Ascending aorta (tissue), 2 donors: ENCODE measurements at regions of chr6 and their contacts with region 1.

Region 1: DNA sequence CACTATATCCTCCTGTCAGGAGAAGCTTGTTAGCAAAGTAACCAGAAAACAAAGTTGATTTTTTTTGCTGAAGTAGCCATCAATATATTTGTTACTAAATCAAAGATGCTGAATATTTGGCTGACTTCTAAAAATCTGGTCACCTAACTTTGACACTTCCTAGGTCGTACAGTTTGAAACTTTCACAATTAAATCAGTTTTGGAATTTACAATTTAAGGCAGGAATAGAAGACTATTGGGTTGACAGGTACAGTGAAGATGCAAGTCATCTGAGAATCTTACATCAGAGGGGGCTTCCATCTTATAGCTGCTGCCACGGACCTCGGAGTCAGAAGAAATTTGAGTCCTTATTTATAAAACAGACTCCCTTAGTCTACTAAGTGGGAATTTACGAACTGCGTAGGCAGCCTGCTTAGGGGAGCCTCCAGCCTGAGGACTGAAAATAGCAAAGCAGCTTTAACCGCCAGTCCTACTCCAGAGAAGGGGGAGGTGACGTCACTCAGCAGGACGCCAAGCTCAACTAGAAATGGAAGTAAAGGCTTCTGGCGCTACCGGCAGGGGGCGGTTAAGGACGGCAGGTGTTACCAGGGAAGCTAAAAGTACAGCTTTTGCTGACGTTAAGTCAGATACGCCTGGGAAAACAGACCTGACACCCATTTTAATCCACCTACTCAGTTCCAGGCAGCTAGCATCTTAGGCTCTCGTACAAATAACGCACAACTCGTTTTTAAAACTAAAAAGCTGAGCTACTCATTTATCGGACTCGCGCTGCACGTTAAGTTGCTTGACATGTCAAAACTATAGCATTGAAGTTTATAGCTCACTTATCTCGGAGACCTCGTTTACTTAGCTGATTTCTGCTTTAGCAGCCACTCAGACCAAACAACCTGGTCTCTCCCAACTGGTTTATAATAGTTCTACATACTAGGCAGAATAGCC is 61.1 kb upstream of the HFE start:
- DNase-seq: peak; percentile 96 to 99
- H3K4me3 ChIP-seq: peak overlapping the region; percentile 64 to 75
- H3K27ac ChIP-seq: peak overlapping the region; percentile 90 to 97
- H3K4me1 ChIP-seq: peaks cover 0 to 19% of the 10 kb centered on the region in 2 donors
- H3K27me3 ChIP-seq: no peaks in the 10 kb centered on the region
- CTCF ChIP-seq: peak; percentile 80 to 87 (median 82)

Region 2: DNA sequence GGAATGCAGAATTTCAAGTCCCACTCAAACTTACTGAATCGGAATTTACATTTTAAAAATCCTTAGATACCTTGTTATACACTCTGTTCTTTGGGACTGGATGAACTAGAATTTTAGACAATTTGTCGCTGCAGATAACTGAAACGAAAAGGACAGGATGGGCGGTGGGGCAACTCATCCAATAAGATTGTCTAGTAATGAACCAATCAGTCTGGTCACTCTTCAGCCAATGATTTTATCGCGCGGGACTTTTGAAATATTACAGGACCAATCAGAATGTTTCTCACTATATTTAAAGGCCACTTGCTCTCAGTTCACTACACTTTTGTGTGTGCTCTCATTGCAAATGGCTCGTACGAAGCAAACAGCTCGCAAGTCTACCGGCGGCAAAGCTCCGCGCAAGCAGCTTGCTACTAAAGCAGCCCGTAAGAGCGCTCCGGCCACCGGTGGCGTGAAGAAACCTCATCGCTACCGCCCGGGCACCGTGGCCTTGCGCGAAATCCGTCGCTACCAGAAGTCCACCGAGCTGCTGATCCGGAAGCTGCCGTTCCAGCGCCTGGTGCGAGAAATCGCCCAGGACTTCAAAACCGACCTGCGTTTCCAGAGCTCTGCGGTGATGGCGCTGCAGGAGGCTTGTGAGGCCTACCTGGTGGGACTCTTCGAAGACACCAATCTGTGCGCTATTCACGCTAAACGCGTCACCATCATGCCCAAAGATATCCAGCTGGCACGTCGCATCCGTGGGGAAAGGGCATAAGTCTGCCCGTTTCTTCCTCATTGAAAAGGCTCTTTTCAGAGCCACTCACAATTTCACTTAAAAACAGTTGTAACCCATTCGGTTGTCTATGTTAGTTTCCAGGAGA is 19.1 kb after region 1 on chr6:
- intact Hi-C with region 1: loop called (anchors 2 kb)
- DNase-seq: peak; percentile 55 to 91
- H3K4me3 ChIP-seq: peak overlapping the region; percentile 67 to 75
- H3K27ac ChIP-seq: peak overlapping the region; percentile 90 to 97
- H3K4me1 ChIP-seq: peaks cover 0 to 8% of the 10 kb centered on the region in 2 donors
- H3K27me3 ChIP-seq: no peaks in the 10 kb centered on the region
- CTCF ChIP-seq: no peak

Region 3: GRCh38 chr6:26054857-26055669 is 28.9 kb after region 1 on chr6:
- intact Hi-C with region 1: loop called (anchors 1 kb)
- DNase-seq: peak; percentile 68 to 96
- H3K4me3 ChIP-seq: peak overlapping the region; percentile 74 to 80
- H3K27ac ChIP-seq: peak overlapping the region; percentile 92 to 94
- H3K4me1 ChIP-seq: peaks cover 0 to 7% of the 10 kb centered on the region in 2 donors
- H3K27me3 ChIP-seq: no peaks in the 10 kb centered on the region
- CTCF ChIP-seq: peak in 2 of 3 experiments; percentile 23 to 36

Region 4: GRCh38 chr6:26216356-26216885 is 190.3 kb after region 1 on chr6:
- intact Hi-C with region 1: loop called (anchors 1 kb)
- DNase-seq: peak in 1 of 2 donors; percentile 89
- H3K4me3 ChIP-seq: peak overlapping the region; percentile 55 to 64
- H3K27ac ChIP-seq: peak overlapping the region; percentile 90
- H3K4me1 ChIP-seq: peaks cover 0 to 11% of the 10 kb centered on the region in 2 donors
- H3K27me3 ChIP-seq: no peaks in the 10 kb centered on the region
- CTCF ChIP-seq: no peak

Region 5: GRCh38 chr6:26322645-26323482 is 296.7 kb after region 1 on chr6:
- intact Hi-C with region 1: no loop called
- DNase-seq: no peak
- H3K4me3 ChIP-seq: peak overlapping the region; percentile 23 to 74
- H3K27ac ChIP-seq: peak overlapping the region in 1 of 2 donors; percentile 26
- H3K4me1 ChIP-seq: no peaks in the 10 kb centered on the region
- H3K27me3 ChIP-seq: peaks cover 5% of the 10 kb centered on the region
- CTCF ChIP-seq: no peak

Region 6: GRCh38 chr6:26553635-26554446 is 527.7 kb after region 1 on chr6:
- intact Hi-C with region 1: loop called (anchors 10 kb)
- DNase-seq: peak; percentile 57 to 93
- H3K4me3 ChIP-seq: peak overlapping the region; percentile 31 to 59
- H3K27ac ChIP-seq: peak overlapping the region; percentile 70 to 75
- H3K4me1 ChIP-seq: peaks cover 0 to 4% of the 10 kb centered on the region in 2 donors
- H3K27me3 ChIP-seq: no peaks in the 10 kb centered on the region
- CTCF ChIP-seq: no peak

Region 7: GRCh38 chr6:27146706-27147505 is 1120.7 kb after region 1 on chr6:
- intact Hi-C with region 1: loop called (anchors 10 kb)
- DNase-seq: peak; percentile 40 to 91
- H3K4me3 ChIP-seq: peak overlapping the region; percentile 68 to 85
- H3K27ac ChIP-seq: peak overlapping the region; percentile 93
- H3K4me1 ChIP-seq: no peaks in the 10 kb centered on the region
- H3K27me3 ChIP-seq: no peaks in the 10 kb centered on the region
- CTCF ChIP-seq: no peak

Region 8: GRCh38 chr6:27838058-27838944 is 1812.1 kb after region 1 on chr6:
- intact Hi-C with region 1: loop called (anchors 10 kb)
- DNase-seq: peak; percentile 50 to 87
- H3K4me3 ChIP-seq: peak overlapping the region; percentile 71 to 80
- H3K27ac ChIP-seq: peak overlapping the region; percentile 95 to 96
- H3K4me1 ChIP-seq: peaks cover 0 to 8% of the 10 kb centered on the region in 2 donors
- H3K27me3 ChIP-seq: no peaks in the 10 kb centered on the region
- CTCF ChIP-seq: no peak